ENCODE measurements at regions of chr2 and their contacts with region 1.

Region 1: DNA sequence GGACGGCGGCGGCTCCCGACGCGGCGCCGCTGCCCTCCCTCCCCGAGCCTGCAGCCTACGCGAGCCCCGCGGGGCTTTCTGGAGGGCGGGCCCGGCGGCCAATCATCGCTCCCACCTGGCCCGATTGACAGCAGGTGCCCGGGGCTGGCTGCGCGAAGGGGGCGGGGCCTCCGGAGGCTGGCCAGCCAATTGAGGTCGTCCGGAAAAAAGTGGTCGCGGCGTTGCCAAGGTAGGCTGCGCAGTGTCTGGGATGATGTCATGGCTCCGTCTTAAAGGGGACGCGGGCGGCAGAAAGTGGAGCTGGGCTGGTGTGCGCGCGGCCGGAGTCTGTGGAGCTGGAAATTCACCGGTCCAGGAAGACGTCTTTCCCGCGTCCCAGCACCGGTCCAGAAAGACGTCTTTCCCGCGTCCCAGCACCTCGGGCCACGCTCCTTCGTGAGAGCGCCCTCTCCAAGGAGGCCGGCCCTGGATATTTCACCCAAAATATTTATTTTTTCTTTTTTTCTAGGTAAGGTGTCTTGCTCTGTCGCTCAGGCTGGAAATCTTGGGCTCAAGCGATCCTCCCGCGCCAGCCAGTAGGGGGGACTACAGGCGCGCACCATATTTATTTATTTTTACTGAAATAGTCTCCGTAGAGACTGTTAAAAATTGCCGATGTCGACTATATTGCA is at the start of gene ACTR1B:
- DNase-seq: peak; percentile 95 to 99 (median 98)
- ATAC-seq: peak; percentile 92
- H3K4me3 ChIP-seq: peak within 1 kb of the TSS; percentile 89
- H3K4me3 Mint-ChIP-seq: peak within 1 kb of the TSS; percentile 93 to 99 (median 96)
- H3K27ac ChIP-seq: peak within 1 kb of the TSS; percentile 98
- H3K27ac Mint-ChIP-seq: peak within 1 kb of the TSS; percentile 96 to 99 (median 98)
- H3K4me1 ChIP-seq: peaks cover 16 to 25% of the 10 kb centered on the region in 2 donors
- H3K4me1 Mint-ChIP-seq: peaks cover 15 to 48% (median 36%) of the 10 kb centered on the region in 7 donors
- H3K27me3 ChIP-seq: no peaks in the 10 kb centered on the region
- H3K27me3 Mint-ChIP-seq: no peaks in the 10 kb centered on the region
- total RNA-seq, gene ACTR1B: 75.9 to 95.5 (median 89.5) TPM

Region 2: DNA sequence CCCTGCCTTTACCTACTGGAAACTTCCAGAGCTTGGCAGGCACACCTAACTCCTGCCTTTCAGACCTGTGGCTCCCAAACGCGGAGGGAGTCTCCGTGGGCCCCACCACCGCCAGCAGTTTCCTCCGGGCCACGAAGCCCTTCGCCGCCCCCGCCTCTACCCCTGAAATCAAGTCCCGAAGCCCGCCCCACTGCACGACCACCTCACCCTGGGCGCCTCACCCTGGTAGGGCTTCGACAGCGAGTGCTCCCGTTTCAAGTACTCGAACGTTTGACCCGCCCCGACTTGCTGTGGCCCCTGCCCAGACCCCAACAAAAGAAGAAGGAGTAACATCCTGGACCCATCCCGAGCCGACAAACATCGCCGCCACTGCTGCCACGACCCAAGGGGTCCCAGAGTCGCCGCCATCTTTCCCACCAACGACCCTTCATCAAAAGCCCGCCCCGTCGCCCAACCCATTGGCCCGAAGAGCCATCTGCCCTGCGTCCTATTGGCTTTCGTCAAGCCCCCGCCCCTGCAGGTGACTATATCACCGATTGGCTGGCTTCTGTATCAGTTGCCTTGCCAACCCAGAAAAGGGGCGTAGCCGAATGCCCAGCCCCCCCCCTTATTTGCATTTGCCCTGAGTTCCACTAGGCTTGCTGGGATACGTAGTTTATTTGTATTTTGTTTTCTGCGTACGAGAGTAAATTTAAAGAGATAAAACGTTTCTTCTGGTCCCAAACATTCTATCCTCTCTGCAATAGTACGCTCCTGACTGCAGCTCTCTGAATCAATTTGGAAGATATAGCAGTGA is 924.3 kb before region 1 on chr2 and contains the start of gene LMAN2L:
- CTCF ChIA-PET with region 1: no interaction called
- POLR2A ChIA-PET with region 1: interaction called, 3 read pairs
- intact Hi-C with region 1: loop called in 1 of 2 experiments (anchors 5 kb)
- DNase-seq: peak; percentile 78 to 99 (median 94)
- ATAC-seq: peak; percentile 100
- H3K4me3 ChIP-seq: peak within 1 kb of the TSS; percentile 70
- H3K4me3 Mint-ChIP-seq: peak within 1 kb of the TSS; percentile 92 to 100 (median 97)
- H3K27ac ChIP-seq: peak within 1 kb of the TSS; percentile 75
- H3K27ac Mint-ChIP-seq: peak within 1 kb of the TSS; percentile 83 to 96 (median 90)
- H3K4me1 ChIP-seq: peaks cover 6% of the 10 kb centered on the region in 2 donors
- H3K4me1 Mint-ChIP-seq: peaks cover 20 to 48% (median 37%) of the 10 kb centered on the region in 7 donors
- H3K27me3 ChIP-seq: no peaks in the 10 kb centered on the region
- H3K27me3 Mint-ChIP-seq: no peaks in the 10 kb centered on the region
- total RNA-seq, gene LMAN2L: 5.0 to 10.9 (median 9.2) TPM

Region 3: DNA sequence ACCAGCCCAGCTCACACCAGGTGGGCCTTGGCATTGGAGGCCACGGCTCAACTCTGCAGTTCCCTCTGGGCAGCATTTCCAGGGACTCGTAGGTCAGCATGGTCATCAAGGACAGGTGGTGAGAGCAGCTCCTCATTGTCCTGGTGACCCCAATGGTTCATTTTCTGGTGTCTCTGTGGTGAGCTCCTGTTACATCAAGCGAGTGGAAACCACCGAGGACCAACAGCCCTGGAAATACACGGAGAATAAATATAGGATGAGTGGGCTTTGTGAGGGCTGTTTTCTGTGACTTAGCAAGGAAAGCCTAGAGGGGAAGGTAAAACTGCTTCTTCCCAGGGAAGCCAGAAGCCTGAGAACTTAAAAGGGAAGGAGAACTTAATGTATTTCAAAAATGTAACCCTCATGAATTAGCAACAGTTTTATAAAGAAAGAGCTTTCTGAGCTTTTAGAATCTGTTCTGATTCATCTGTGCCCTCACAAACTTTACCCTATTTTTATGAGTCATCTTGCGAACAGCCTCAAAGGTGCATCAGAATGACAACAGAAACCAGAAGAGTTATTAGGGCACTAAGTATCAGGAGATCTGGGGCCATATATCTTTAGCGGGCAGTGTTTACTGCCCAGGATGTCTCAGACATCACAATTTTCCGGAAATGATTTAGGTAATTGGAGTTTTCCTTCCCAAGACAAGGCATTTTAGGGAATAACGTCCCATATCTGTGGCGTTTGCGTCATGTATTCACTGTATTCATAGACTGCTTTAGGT is 24.1 kb after region 1 on chr2:
- CTCF ChIA-PET with region 1: no interaction called
- POLR2A ChIA-PET with region 1: no interaction called
- intact Hi-C with region 1: loop called in 1 of 2 experiments (anchors 2 kb)
- DNase-seq: peak in 1 of 9 donors; percentile 17
- ATAC-seq: no peak
- H3K4me3 ChIP-seq: no peak overlapping the region
- H3K4me3 Mint-ChIP-seq: no peak overlapping the region
- H3K27ac ChIP-seq: no peak overlapping the region
- H3K27ac Mint-ChIP-seq: peak overlapping the region in 1 of 9 donors; percentile 55
- H3K4me1 ChIP-seq: no peaks in the 10 kb centered on the region
- H3K4me1 Mint-ChIP-seq: peaks cover 0 to 16% (median 0%) of the 10 kb centered on the region in 7 donors
- H3K27me3 ChIP-seq: no peaks in the 10 kb centered on the region
- H3K27me3 Mint-ChIP-seq: peaks cover 0 to 2% (median 0%) of the 10 kb centered on the region in 5 donors

Region 4: DNA sequence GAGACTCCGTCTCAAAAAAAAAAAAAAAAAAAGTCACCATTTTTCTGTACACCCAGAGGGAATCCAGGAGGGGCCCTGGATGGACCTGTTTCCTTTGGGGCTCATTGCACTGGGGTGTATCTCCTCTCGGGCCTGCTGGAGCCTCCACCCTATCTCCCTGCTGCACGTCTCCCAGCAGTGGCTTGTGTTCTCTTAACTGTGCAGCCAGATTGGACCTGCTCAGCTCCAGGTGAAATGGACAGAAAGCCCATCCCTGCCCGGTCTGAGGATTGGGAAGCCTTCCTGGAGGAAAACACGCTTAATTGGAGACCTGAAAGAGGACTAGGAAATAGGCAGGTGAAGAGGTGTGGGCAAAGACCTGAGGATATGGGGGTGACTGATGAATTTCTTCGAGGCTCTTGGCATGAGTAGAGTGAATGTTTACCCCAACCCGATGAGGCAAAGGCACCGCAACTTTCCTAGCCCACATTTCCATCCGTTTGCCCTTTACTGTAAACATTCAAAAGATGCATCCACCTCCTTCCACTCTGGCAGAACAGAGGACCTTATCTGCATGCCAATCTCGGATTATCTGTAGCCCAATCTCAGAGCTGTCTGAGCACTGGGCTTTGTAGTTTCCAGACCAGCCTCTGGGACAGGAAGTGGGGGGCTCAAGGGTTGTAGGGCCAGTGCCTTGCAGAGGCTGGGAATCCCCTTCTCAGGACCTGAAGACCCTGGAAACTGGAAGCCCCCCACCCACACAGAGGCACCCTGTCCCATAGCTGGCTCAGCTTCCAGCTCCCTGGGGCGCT is 46.7 kb after region 1 on chr2:
- CTCF ChIA-PET with region 1: interaction called, 5 read pairs
- POLR2A ChIA-PET with region 1: interaction called, 12 read pairs
- intact Hi-C with region 1: loop called (anchors 1 kb)
- DNase-seq: peak in 1 of 9 donors; percentile 50
- ATAC-seq: no peak
- H3K4me3 ChIP-seq: no peak overlapping the region
- H3K4me3 Mint-ChIP-seq: peak overlapping the region in 9 of 10 donors; percentile 12 to 98 (median 38)
- H3K27ac ChIP-seq: peak overlapping the region; percentile 95
- H3K27ac Mint-ChIP-seq: peak overlapping the region; percentile 12 to 100 (median 97)
- H3K4me1 ChIP-seq: peaks cover 35 to 42% of the 10 kb centered on the region in 2 donors
- H3K4me1 Mint-ChIP-seq: peaks cover 42 to 62% (median 48%) of the 10 kb centered on the region in 7 donors
- H3K27me3 ChIP-seq: no peaks in the 10 kb centered on the region
- H3K27me3 Mint-ChIP-seq: peaks cover 0 to 2% (median 0%) of the 10 kb centered on the region in 5 donors

Region 5: DNA sequence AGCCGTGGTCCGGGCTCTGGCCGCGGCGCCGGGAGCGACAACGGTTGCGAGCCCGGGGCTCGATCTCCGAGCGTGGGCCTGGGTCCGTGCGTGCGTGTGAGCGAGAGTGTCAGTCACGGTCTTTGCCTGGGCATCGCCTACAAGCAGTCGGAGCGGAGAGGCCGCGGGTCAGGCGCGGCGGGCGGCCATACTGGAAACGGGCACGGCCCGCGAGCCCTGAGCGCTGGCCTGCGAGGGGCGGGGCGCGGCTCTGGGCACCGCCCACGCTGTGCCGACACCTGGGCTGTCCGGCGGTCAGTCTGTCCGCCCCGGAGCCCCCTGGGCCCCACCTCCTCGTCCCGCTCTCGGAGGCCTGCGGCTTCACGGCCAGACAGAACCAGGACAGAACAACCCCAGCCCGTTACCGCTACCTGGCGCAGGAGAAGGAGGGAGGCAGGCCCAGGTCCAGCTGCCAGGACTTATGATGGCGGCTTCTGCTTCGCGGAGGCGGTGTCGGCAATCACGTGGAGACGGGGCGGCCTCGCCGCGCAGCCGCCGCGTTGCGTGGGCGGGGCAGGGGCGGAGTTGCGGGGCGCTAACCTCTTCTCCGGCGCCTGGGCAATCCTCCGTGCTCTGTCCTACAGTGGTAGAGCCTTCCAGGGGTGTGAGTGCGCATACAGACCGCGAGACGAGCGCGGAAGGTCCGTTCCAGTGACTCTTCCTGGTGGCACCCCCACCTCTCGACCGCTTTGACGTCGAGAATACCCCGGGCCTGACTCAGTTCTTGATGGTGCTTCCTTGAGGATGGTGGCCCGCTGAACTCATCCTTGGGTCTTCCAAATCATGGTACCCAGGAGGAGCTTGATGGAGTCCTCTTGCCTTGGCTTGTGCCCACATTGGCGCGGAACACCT is 331.9 kb after region 1 on chr2 and contains the start of gene TMEM131:
- CTCF ChIA-PET with region 1: no interaction called
- POLR2A ChIA-PET with region 1: no interaction called
- intact Hi-C with region 1: loop called in 1 of 2 experiments (anchors 5 kb)
- DNase-seq: peak; percentile 89 to 98 (median 95)
- ATAC-seq: peak; percentile 93
- H3K4me3 ChIP-seq: peak within 1 kb of the TSS; percentile 90
- H3K4me3 Mint-ChIP-seq: peak within 1 kb of the TSS; percentile 85 to 98 (median 96)
- H3K27ac ChIP-seq: peak within 1 kb of the TSS; percentile 96
- H3K27ac Mint-ChIP-seq: peak within 1 kb of the TSS; percentile 86 to 95 (median 93)
- H3K4me1 ChIP-seq: peaks cover 14 to 17% of the 10 kb centered on the region in 2 donors
- H3K4me1 Mint-ChIP-seq: peaks cover 20 to 40% (median 38%) of the 10 kb centered on the region in 7 donors
- H3K27me3 ChIP-seq: no peaks in the 10 kb centered on the region
- H3K27me3 Mint-ChIP-seq: peaks cover 0 to 4% (median 0%) of the 10 kb centered on the region in 5 donors
- total RNA-seq, gene TMEM131: 39.7 to 46.4 (median 43.6) TPM

Region 6: GRCh38 chr2:98175811-98176210 is 511.7 kb after region 1 on chr2:
- CTCF ChIA-PET with region 1: no interaction called
- POLR2A ChIA-PET with region 1: no interaction called
- intact Hi-C with region 1: no loop called
- DNase-seq: peak in 1 of 9 donors; percentile 8
- ATAC-seq: no peak
- H3K4me3 ChIP-seq: no peak overlapping the region
- H3K4me3 Mint-ChIP-seq: no peak overlapping the region
- H3K27ac ChIP-seq: no peak overlapping the region
- H3K27ac Mint-ChIP-seq: no peak overlapping the region
- H3K4me1 ChIP-seq: no peaks in the 10 kb centered on the region
- H3K4me1 Mint-ChIP-seq: peaks cover 0 to 12% (median 0%) of the 10 kb centered on the region in 7 donors
- H3K27me3 ChIP-seq: peaks cover 0 to 3% of the 10 kb centered on the region in 2 donors
- H3K27me3 Mint-ChIP-seq: peaks cover 48 to 63% (median 52%) of the 10 kb centered on the region in 5 donors

Region 7: GRCh38 chr2:99154643-99155536 is 1490.8 kb after region 1 on chr2 and contains the starts of genes LIPT1 and TSGA10:
- CTCF ChIA-PET with region 1: no interaction called
- POLR2A ChIA-PET with region 1: no interaction called
- intact Hi-C with region 1: loop called in 1 of 2 experiments (anchors 10 kb)
- DNase-seq: peak; percentile 80 to 95 (median 92)
- ATAC-seq: peak; percentile 98
- H3K4me3 ChIP-seq: peak within 1 kb of the TSS; percentile 83
- H3K4me3 Mint-ChIP-seq: peak within 1 kb of the TSS in 1 of 10 donors; percentile 93
- H3K27ac ChIP-seq: peak within 1 kb of the TSS; percentile 92
- H3K27ac Mint-ChIP-seq: peak within 1 kb of the TSS in 2 of 9 donors; percentile 96 to 97
- H3K4me1 ChIP-seq: peaks cover 15 to 18% of the 10 kb centered on the region in 2 donors
- H3K4me1 Mint-ChIP-seq: peaks cover 25 to 57% (median 42%) of the 10 kb centered on the region in 7 donors
- H3K27me3 ChIP-seq: no peaks in the 10 kb centered on the region
- H3K27me3 Mint-ChIP-seq: no peaks in the 10 kb centered on the region
- total RNA-seq, gene LIPT1: 7.7 to 24.1 (median 15.9) TPM
- total RNA-seq, gene TSGA10: 3.5 to 31.7 (median 12.6) TPM